ENCODE measurements at regions of chr3 and their contacts with region 1.

Region 1: GRCh38 chr3:126314790-126315658 is 42.2 kb downstream of the KLF15 start:
- DNase-seq: no peak
- ATAC-seq: no peak
- H3K4me3 ChIP-seq: no peak overlapping the region
- H3K27ac ChIP-seq: no peak overlapping the region
- H3K4me1 ChIP-seq: no peaks in the 10 kb centered on the region
- H3K27me3 ChIP-seq: peaks cover 0 to 2% of the 10 kb centered on the region in 2 experiments; a peak in 3 of 4 replicates
- CTCF ChIP-seq: no peak
- EP300 ChIP-seq: no peak
- POLR2A ChIP-seq: no peak
- RAD21 ChIP-seq: no peak

Region 2: GRCh38 chr3:124429129-124429815 is 1885.8 kb before region 1 on chr3:
- CTCF ChIA-PET with region 1: no interaction called
- POLR2A ChIA-PET with region 1: interaction called, 10 read pairs
- RAD21 ChIA-PET with region 1: no interaction called
- SMC1A ChIA-PET with region 1: no interaction called
- in situ Hi-C with region 1: no loop called
- intact Hi-C with region 1: no loop called
- DNase-seq: no peak
- ATAC-seq: no peak
- H3K4me3 ChIP-seq: no peak overlapping the region
- H3K27ac ChIP-seq: no peak overlapping the region
- H3K4me1 ChIP-seq: no peaks in the 10 kb centered on the region
- H3K27me3 ChIP-seq: no peaks in the 10 kb centered on the region; a peak in 1 of 4 replicates
- CTCF ChIP-seq: no peak
- EP300 ChIP-seq: no peak
- POLR2A ChIP-seq: no peak
- RAD21 ChIP-seq: no peak